ENCODE measurements at regions of chr11 and their contacts with region 1.

Region 1: DNA sequence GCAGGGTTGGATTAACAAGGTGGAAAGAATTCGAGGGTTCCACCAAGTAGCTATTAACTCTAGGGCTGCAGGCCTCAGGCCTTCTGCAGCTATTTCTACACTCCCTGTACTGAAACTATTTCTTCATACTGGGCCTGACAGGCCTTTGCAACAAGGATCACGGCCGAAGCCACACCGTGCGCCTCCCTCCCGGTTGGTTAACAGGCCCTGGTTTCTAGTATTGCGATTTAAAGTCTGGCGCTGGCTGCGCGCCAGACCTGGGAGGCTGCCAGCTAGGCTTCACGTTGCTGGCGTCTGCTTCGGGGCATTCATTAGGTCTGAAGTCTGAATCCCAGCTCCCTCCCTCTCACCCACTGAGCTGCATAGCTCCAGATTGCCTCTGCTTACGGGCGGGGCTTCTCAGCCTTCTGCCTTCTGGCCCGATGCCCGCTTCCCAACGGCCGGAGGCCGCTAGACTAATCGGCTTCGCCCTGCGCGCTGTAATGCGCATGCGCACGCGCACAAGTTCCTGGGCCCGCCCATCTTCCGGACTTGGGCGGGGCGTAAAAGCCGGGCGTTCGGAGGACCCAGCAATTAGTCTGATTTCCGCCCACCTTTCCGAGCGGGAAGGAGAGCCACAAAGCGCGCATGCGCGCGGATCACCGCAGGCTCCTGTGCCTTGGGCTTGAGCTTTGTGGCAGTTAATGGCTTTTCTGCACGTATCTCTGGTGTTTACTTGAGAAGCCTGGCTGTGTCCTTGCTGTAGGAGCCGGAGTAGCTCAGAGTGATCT is 1.6 kb downstream of the LDHA start:
- DNase-seq: peak; percentile 99
- H3K4me3 ChIP-seq: peak overlapping the region; percentile 86 to 95 (median 92)
- H3K27ac ChIP-seq: peak overlapping the region; percentile 95 to 99 (median 96)
- H3K4me1 ChIP-seq: peaks cover 8 to 72% (median 35%) of the 10 kb centered on the region in 6 donors
- H3K27me3 ChIP-seq: no peaks in the 10 kb centered on the region
- CTCF ChIP-seq: peak in 1 of 11 experiments; percentile 9
- POLR2A ChIP-seq: peak in 2 of 3 donors; percentile 30 to 77

Region 2: GRCh38 chr11:18046116-18046777 is 349.7 kb before region 1 on chr11 and contains the start of gene TPH1:
- intact Hi-C with region 1: no loop called
- DNase-seq: no peak
- H3K4me3 ChIP-seq: peak within 1 kb of the TSS in 1 of 8 donors; percentile 13
- H3K27ac ChIP-seq: no peak within 1 kb of the TSS
- H3K4me1 ChIP-seq: no peaks in the 10 kb centered on the region
- H3K27me3 ChIP-seq: peaks cover 0 to 43% (median 10%) of the 10 kb centered on the region in 7 donors
- CTCF ChIP-seq: no peak
- POLR2A ChIP-seq: no peak
- total RNA-seq, gene TPH1: 0.59 to 1.9 (median 0.94) TPM

Region 3: DNA sequence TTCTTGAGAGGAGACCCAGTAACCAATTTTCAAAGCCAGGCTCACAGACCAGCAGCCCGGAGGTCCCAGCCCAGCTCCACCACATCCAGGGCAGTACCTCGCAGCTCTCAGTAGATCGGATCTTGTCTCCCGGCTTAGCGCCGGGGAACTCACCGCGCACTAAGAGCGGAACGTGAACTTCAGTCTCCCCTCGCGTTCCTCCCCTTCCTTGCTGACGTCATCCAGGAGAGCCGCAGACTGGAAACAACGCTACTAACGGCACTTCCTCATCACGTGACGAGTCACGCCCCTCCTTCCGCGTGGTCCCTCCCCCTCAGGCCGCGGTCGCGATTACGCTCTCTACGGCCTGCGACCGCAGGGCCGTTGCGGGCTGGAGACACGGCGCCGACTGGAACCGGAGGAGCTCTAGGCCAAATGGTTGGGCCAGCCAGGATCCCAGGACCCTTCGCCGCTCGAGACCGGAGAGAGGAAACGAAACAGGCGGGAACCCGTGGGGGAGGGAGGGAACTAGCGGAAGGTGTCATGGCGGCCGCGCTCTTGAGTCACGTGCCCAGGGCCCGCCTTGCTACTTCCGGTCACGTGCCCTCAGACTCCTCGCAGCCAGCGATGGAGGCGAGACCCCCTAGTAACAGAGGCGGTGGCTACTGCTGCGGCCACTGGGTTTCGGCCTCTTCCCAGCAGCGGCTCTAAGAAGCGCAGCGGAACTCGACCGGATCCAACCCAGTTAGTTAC is 73.8 kb before region 1 on chr11 and contains the starts of genes GTF2H1 and HPS5:
- intact Hi-C with region 1: loop called (anchors 5 kb)
- DNase-seq: peak; percentile 98
- H3K4me3 ChIP-seq: peak within 1 kb of the TSS; percentile 44 to 84 (median 70)
- H3K27ac ChIP-seq: peak within 1 kb of the TSS; percentile 94 to 99 (median 98)
- H3K4me1 ChIP-seq: peaks cover 40 to 86% (median 60%) of the 10 kb centered on the region in 6 donors
- H3K27me3 ChIP-seq: no peaks in the 10 kb centered on the region
- CTCF ChIP-seq: peak in 2 of 11 experiments; percentile 9 to 16
- POLR2A ChIP-seq: peak; percentile 60 to 97 (median 82)
- total RNA-seq, gene GTF2H1: 39.6 to 65.4 (median 52.0) TPM
- total RNA-seq, gene HPS5: 25.9 to 35.7 (median 30.0) TPM

Region 4: GRCh38 chr11:18449251-18449650 is 53.3 kb after region 1 on chr11:
- intact Hi-C with region 1: no loop called
- DNase-seq: no peak
- H3K4me3 ChIP-seq: no peak overlapping the region
- H3K27ac ChIP-seq: no peak overlapping the region
- H3K4me1 ChIP-seq: no peaks in the 10 kb centered on the region
- H3K27me3 ChIP-seq: no peaks in the 10 kb centered on the region
- CTCF ChIP-seq: no peak
- POLR2A ChIP-seq: no peak

Region 5: DNA sequence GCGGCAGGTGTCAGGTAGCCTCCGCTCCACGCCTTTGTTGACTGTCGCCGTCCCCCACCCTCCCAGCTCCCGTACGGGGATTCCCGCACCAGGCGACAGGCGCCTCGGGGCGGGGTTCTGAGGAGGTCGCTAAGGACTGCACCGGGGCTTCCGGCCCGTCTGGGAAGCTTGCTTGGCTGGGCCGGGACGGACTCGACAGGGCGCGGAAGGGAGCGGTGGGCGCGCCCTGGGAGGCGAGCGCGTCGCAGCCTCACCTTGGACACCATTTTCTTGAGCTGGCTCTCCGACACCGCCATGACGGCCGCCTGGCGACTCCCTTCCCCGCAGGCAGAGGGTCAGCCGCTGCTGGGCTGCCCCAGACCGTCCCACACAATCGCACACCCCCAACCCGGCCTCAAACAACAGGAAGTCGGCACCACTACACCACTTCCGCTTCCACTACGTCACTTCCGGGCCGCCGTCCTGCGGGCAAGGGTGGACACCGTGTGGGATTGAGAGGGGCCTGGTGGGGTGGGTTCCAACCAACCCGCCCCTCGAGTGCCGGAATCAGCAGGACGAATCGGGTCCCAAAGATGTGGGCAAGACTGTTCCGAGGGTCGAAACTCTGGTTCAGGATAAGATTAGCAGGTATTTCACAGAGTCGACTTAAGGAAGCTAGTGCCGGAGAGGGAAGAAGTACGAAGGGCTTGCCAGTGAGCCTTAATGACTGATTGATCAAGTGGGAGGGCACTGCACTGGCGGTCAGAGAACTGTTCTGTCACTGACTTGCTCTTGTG is 130.8 kb after region 1 on chr11 and contains the start of gene TSG101:
- intact Hi-C with region 1: no loop called
- DNase-seq: peak; percentile 98
- H3K4me3 ChIP-seq: peak within 1 kb of the TSS; percentile 49 to 86 (median 76)
- H3K27ac ChIP-seq: peak within 1 kb of the TSS; percentile 81 to 99 (median 98)
- H3K4me1 ChIP-seq: peaks cover 17 to 58% (median 41%) of the 10 kb centered on the region in 6 donors
- H3K27me3 ChIP-seq: no peaks in the 10 kb centered on the region
- CTCF ChIP-seq: peak in 1 of 11 experiments; percentile 16
- POLR2A ChIP-seq: peak in 2 of 3 donors; percentile 49 to 76
- total RNA-seq, gene TSG101: 41.5 to 95.1 (median 52.1) TPM

Measured in spleen (tissue), 13 donors.